Dendritic cell treated with granulocyte-macrophage colony-stimulating factor and Interleukin-4, amounts not matched to agents 40 ng/mL and 50 ng/mL, for 4 days (primary cell): ENCODE measurements at regions of chr10 and their contacts with region 1.

Region 1: DNA sequence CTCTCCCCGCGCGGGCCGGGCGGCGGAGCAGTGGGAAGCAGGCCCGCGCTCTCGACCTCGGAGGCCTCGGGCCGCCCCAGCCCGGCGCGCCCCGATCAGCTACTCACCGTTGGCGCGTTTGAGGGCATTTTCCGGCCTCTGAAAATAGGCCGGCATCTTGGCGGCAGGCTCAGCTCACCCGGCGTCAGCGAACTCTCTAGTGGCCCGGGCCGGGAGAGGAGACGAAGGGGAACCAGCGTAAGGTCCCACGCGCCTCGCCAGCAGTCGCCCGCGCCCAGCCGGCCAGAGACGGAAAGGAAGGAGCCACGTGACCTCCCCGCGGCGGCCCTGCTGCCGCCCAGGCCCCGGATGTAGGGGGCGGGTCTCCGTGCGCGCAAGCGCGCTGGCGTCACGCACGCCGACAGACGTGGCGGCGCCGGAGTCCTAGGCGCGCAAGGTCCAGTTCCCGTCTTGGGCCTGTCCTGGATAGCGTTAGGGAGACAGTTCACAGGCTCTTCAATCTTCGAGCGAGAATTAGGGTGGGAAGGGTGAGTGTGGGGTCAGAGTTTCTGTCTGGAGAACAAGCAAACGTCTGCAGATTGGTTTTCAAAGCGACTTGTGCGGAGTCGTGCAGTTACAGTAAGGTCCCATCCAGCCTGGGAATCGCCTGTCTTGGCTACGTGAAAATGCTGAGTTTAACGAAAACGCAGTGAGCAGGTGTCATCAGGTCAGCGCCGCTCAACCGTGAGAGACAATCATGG is at the start of gene EIF3A:
- H3K4me3 Mint-ChIP-seq: peak within 1 kb of the TSS; percentile 97
- H3K27ac Mint-ChIP-seq: peak within 1 kb of the TSS; percentile 99
- H3K4me1 Mint-ChIP-seq: peaks cover 36% of the 10 kb centered on the region
- H3K27me3 Mint-ChIP-seq: no peaks in the 10 kb centered on the region

Region 2: GRCh38 chr10:119103903-119104652 is 23.4 kb after region 1 on chr10 and contains the start of gene DENND10:
- intact Hi-C with region 1: loop called (anchors 1 kb)
- H3K4me3 Mint-ChIP-seq: peak within 1 kb of the TSS; percentile 74
- H3K27ac Mint-ChIP-seq: peak within 1 kb of the TSS; percentile 59
- H3K4me1 Mint-ChIP-seq: peaks cover 33% of the 10 kb centered on the region
- H3K27me3 Mint-ChIP-seq: no peaks in the 10 kb centered on the region